Ascending aorta (tissue), 2 donors: ENCODE measurements at regions of chr6 and their contacts with region 1.

Region 1: GRCh38 chr6:23055523-23055922 is 486.2 kb downstream of the HDGFL1 start:
- DNase-seq: no peak
- H3K4me3 ChIP-seq: no peak overlapping the region
- H3K27ac ChIP-seq: no peak overlapping the region
- H3K4me1 ChIP-seq: no peaks in the 10 kb centered on the region
- H3K27me3 ChIP-seq: no peaks in the 10 kb centered on the region
- CTCF ChIP-seq: no peak

Region 2: DNA sequence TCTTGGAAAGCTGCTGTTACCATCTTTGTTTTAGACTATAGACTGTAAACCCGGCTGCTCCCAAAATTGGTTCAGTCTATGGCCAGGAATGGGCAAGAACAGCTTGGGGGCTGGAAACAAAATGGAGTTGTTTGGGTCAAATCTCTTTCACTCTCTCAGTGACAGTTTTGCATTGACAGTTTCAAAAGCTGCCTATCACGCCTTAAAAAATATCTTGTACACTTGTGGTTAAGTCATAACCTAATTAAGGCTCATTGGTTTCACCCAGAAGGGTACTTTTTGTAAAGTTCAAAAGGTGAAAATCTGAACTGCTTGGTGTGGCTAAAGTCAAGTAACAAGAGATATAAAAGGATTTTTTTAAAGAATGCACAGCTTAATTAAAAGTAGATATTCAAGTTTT is 682.6 kb before region 1 on chr6:
- intact Hi-C with region 1: loop called (anchors 5 kb)
- DNase-seq: no peak
- H3K4me3 ChIP-seq: no peak overlapping the region
- H3K27ac ChIP-seq: no peak overlapping the region
- H3K4me1 ChIP-seq: no peaks in the 10 kb centered on the region
- H3K27me3 ChIP-seq: no peaks in the 10 kb centered on the region
- CTCF ChIP-seq: no peak

Region 3: GRCh38 chr6:22954749-22955385 is 100.7 kb before region 1 on chr6:
- intact Hi-C with region 1: no loop called
- DNase-seq: no peak
- H3K4me3 ChIP-seq: peak overlapping the region; percentile 34 to 50
- H3K27ac ChIP-seq: no peak overlapping the region
- H3K4me1 ChIP-seq: peaks cover 0 to 10% of the 10 kb centered on the region in 2 donors
- H3K27me3 ChIP-seq: no peaks in the 10 kb centered on the region
- CTCF ChIP-seq: no peak

Region 4: GRCh38 chr6:23174781-23175361 is 119.3 kb after region 1 on chr6:
- intact Hi-C with region 1: no loop called
- DNase-seq: no peak
- H3K4me3 ChIP-seq: no peak overlapping the region
- H3K27ac ChIP-seq: no peak overlapping the region
- H3K4me1 ChIP-seq: no peaks in the 10 kb centered on the region
- H3K27me3 ChIP-seq: no peaks in the 10 kb centered on the region
- CTCF ChIP-seq: no peak